ENCODE measurements at regions of chr12 and their contacts with region 1.

Region 1: DNA sequence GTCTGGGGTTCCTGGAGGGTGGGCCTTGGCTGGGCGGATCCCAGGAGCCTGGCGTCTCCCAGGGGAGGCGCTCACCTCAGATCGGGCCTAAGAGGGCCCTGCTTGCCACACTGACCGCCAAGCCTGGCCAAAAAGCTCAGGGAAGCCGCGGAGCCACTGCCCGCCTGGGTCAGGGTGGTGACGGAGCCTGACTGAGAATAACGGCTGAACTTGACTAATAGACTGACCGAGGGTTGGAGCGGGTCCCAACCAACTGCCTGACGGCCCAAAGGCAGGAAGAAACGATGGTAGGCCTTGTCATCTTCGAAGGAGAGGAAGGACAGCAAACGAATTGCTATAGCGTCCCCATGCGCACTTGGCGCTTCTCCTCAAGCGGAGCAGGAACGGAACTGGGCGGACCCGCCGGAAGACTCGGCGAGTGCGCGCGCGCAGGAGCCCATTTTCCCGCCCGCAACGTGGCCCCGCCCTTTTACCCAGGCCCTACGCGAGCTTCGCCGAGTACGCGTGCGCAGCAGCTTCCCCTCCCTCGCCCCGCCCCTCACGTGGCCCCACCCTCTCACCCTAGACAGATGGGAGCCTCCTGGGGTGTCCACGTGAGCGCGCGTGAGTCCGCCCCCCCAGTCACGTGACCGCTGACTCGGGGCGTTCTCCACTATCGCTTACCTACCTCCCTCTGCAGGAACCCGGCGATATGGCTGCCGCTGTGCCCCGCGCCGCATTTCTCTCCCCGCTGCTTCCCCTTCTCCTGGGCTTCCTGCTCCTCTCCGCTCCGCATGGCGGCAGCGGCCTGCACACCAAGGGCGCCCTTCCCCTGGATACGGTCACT is at the starts of genes ERP29 and TMEM116:
- DNase-seq: peak; percentile 99
- ATAC-seq: peak; percentile 75
- H3K4me3 ChIP-seq: peak within 1 kb of the TSS; percentile 50 to 97 (median 88)
- H3K4me3 Mint-ChIP-seq: peak within 1 kb of the TSS; percentile 87
- H3K27ac ChIP-seq: peak within 1 kb of the TSS; percentile 92 to 93
- H3K27ac Mint-ChIP-seq: peak within 1 kb of the TSS; percentile 91
- H3K4me1 ChIP-seq: peaks cover 45 to 54% of the 10 kb centered on the region in 2 donors
- H3K4me1 Mint-ChIP-seq: peaks cover 46% of the 10 kb centered on the region
- H3K27me3 ChIP-seq: no peaks in the 10 kb centered on the region
- H3K27me3 Mint-ChIP-seq: no peaks in the 10 kb centered on the region
- CTCF ChIP-seq: peak; percentile 69
- total RNA-seq, gene ERP29: 149 and 152 TPM in 2 replicates
- total RNA-seq, gene TMEM116: 10.4 and 11.7 TPM in 2 replicates

Region 2: DNA sequence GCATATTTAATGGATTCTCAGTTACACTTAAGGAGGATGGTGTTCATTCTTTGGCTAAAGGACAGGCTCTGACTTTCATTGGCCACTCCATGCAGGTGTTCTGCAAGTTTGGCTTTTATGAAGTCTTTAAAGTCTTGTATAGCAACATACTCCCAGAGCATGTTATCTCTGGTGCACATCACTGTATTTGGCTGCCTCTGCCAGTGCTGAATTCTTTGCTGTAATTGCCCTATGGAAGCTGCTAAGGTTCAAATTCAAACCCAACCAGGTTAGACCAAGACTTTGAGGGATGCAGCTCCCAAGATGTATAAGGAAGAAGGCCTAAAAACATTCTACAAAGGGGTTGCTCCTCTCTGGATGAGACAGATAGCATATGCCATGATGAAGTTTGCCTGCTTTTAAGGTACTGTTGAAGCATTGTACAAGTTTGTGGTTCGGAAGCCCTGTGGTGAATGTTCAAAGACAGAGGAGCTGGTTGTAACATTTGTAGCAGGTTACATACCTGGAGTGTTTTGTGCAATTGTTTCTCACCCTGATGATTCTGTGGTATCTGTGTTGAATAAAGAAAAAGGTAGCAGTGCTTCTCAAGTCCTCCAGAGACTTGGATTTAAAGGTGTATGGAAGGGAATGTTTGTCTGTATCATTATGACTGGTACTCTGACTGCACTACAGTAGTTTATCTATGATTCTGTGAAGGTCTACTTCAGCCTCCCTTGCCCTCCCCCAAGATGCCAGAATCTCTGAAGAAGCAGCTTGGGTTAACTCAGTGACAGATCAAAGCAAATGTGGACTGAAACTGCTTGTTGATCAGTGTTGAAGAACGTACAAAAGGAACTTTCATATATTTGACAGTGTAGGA is 19.5 kb before region 1 on chr12:
- CTCF ChIA-PET with region 1: interaction called, 4 read pairs
- POLR2A ChIA-PET with region 1: interaction called, 6 read pairs
- intact Hi-C with region 1: loop called (anchors 1 kb)
- DNase-seq: peak; percentile 16
- ATAC-seq: peak; percentile 10
- H3K4me3 ChIP-seq: peak overlapping the region in 2 of 5 experiments; percentile 7 to 60
- H3K4me3 Mint-ChIP-seq: peak overlapping the region; percentile 91
- H3K27ac ChIP-seq: no peak overlapping the region
- H3K27ac Mint-ChIP-seq: no peak overlapping the region
- H3K4me1 ChIP-seq: peaks cover 42 to 45% of the 10 kb centered on the region in 2 donors
- H3K4me1 Mint-ChIP-seq: peaks cover 42% of the 10 kb centered on the region
- H3K27me3 ChIP-seq: peaks cover 0 to 17% (median 12%) of the 10 kb centered on the region in 4 experiments
- H3K27me3 Mint-ChIP-seq: peaks cover 26% of the 10 kb centered on the region
- CTCF ChIP-seq: no peak

Region 3: GRCh38 chr12:112108201-112109079 is 95.5 kb after region 1 on chr12 and contains the start of gene NAA25:
- CTCF ChIA-PET with region 1: interaction called, 3 read pairs
- POLR2A ChIA-PET with region 1: interaction called, 8 read pairs
- intact Hi-C with region 1: loop called (anchors 1 kb)
- DNase-seq: peak; percentile 91
- ATAC-seq: peak; percentile 72
- H3K4me3 ChIP-seq: peak within 1 kb of the TSS; percentile 84 to 100 (median 97)
- H3K4me3 Mint-ChIP-seq: peak within 1 kb of the TSS; percentile 99
- H3K27ac ChIP-seq: peak within 1 kb of the TSS; percentile 81 to 88
- H3K27ac Mint-ChIP-seq: peak within 1 kb of the TSS; percentile 99
- H3K4me1 ChIP-seq: peaks cover 25 to 29% of the 10 kb centered on the region in 2 donors
- H3K4me1 Mint-ChIP-seq: peaks cover 39% of the 10 kb centered on the region
- H3K27me3 ChIP-seq: no peaks in the 10 kb centered on the region
- H3K27me3 Mint-ChIP-seq: no peaks in the 10 kb centered on the region
- CTCF ChIP-seq: no peak
- total RNA-seq, gene NAA25: 36.5 and 40.8 TPM in 2 replicates

Region 4: DNA sequence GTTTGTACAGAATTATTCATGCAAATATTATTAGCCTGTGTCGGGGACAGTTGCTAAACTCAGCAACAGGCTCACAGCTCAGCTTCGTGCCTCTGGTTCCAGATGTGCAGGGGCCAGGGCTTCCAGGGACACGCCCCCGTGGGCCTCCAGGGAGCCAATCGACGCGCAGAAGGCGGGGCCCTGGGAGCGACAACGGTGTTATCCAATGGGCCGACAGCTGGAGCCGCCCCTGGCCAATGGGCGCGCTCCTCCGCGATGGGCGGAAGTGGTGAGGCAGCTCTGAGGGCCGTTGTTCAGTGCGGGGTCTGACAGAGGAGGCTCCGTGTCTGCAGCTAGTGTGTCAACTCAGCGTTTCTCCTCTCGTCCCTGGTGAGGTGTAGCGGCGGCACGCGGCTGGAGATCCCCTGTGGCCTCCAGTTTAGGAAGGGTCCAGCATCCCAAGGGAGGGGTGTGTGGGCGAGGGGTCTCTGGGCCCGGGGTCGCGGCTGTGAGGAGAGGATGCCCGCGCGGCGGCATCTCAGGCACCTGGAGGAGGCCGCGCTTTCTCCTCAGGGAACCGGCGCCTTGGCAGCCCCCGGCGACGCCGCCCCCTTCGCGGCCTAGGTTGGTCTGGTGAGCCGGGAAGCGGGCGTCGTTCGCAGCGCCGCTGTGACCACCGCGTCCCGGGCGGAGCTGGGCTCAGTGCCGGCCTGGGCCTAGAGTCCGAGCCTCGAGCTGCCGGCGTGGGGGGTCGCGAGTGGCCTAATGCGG is 112.4 kb after region 1 on chr12 and contains the start of gene TRAFD1:
- CTCF ChIA-PET with region 1: no interaction called
- POLR2A ChIA-PET with region 1: interaction called, 9 read pairs
- intact Hi-C with region 1: loop called (anchors 1 kb)
- DNase-seq: peak; percentile 98
- ATAC-seq: peak; percentile 98
- H3K4me3 ChIP-seq: peak within 1 kb of the TSS; percentile 64 to 88 (median 86)
- H3K4me3 Mint-ChIP-seq: peak within 1 kb of the TSS; percentile 76
- H3K27ac ChIP-seq: peak within 1 kb of the TSS; percentile 62 to 86
- H3K27ac Mint-ChIP-seq: peak within 1 kb of the TSS; percentile 89
- H3K4me1 ChIP-seq: peaks cover 40 to 47% of the 10 kb centered on the region in 2 donors
- H3K4me1 Mint-ChIP-seq: peaks cover 43% of the 10 kb centered on the region
- H3K27me3 ChIP-seq: no peaks in the 10 kb centered on the region
- H3K27me3 Mint-ChIP-seq: peaks cover 4% of the 10 kb centered on the region
- CTCF ChIP-seq: no peak
- total RNA-seq, gene TRAFD1: 37.2 and 37.7 TPM in 2 replicates

Region 5: DNA sequence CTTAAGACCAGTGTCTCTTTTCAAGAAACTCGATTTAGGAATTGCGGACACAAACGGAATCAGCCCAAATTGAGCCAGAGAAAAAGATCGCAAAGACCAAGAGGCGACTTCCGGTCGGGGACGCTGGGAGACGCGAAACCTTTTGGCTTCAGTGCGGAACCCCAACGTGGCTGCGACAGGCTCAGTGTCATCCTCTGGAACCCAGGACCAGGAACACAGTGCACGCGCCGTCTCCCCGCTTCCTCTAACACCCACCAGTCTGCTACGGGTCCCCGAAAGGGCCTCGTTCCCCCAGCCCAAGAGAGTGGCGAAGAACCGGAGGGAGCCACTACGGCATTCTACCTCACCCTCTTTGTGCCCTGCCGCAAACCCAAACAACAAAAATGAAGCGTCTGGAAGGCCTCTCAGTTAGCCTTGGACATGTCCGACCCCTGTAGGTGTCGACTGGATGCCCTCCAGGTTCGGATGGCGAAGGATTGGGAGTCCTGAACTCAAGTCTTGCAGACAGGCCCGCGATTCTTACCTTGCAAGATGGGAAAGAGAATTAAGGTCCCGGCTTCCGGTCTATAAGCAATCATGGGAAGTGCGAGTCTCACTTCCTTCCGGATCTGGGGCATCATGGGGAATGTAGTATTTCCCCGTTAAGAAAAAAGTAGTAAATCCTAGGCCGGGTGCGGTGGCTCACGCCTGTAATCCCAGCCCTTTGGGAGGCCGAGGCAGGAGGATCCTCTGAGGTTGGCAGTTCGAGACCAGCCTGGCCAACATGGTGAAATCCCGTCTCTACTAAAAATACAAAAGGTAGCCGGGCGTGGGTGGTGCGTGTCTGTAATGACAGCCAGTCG is 396.3 kb after region 1 on chr12 and contains the start of gene RPL6:
- CTCF ChIA-PET with region 1: no interaction called
- POLR2A ChIA-PET with region 1: no interaction called
- intact Hi-C with region 1: loop called (anchors 1 kb)
- DNase-seq: peak; percentile 91
- ATAC-seq: peak; percentile 90
- H3K4me3 ChIP-seq: peak within 1 kb of the TSS; percentile 68 to 97 (median 96)
- H3K4me3 Mint-ChIP-seq: peak within 1 kb of the TSS; percentile 100
- H3K27ac ChIP-seq: peak within 1 kb of the TSS; percentile 83 to 91
- H3K27ac Mint-ChIP-seq: peak within 1 kb of the TSS; percentile 100
- H3K4me1 ChIP-seq: peaks cover 15 to 24% of the 10 kb centered on the region in 2 donors
- H3K4me1 Mint-ChIP-seq: peaks cover 28% of the 10 kb centered on the region
- H3K27me3 ChIP-seq: no peaks in the 10 kb centered on the region
- H3K27me3 Mint-ChIP-seq: no peaks in the 10 kb centered on the region
- CTCF ChIP-seq: no peak
- total RNA-seq, gene RPL6: 1,537 and 1,621 TPM in 2 replicates